ENCODE measurements at regions of chr6 and their contacts with region 1.

Region 1: DNA sequence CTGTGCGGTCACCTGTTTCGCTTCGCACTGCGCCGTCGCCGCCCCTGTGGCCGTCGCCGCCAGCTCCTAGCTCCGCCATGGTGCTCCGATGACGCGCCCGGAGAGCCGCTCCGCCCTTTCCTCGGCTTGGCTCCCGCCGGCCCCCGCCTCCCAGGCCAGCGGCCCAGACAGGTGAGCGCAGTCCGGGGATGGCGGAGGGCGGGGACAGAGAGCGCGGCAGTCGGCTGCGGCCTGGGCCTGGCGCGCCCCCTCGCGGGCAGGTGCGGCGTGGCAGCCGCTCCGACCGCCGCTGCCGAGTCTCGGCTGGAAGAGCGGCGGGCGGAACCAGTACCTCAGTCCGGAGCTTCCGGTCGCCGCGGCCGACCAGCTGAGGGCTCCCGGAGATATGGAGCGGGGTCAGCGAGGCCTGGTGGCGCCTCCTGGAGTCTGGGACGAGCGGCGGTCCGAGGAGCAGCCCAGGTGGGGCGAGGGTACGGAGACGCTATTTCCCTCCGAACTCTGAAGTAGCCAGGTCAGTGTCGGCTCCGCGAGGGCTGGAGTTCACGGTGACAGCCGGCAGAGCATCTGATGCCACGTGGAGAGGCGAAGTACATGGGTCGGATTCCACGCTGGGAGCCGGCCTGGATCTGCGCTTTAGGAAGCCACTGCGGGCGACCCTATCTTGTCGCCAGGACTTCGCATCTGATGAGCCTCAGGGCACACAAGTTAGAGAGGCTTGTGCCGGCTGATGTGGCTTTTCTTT is at the start of gene MAP7:
- DNase-seq: peak; percentile 58 to 80
- ATAC-seq: peak; percentile 90 to 94
- H3K4me3 ChIP-seq: peak within 1 kb of the TSS; percentile 98
- H3K27ac ChIP-seq: peak within 1 kb of the TSS; percentile 93 to 97
- H3K4me1 ChIP-seq: peaks cover 36% of the 10 kb centered on the region
- CTCF ChIP-seq: peak; percentile 87
- EP300 ChIP-seq: no peak
- POLR2A ChIP-seq: peak; percentile 44
- RAD21 ChIP-seq: peak; percentile 63 to 89; a peak in 4 of 5 replicates
- polyA plus RNA-seq, gene MAP7: 49.0 and 64.5 TPM in 2 replicates

Region 2: GRCh38 chr6:136371959-136372358 is 178.5 kb before region 1 on chr6:
- CTCF ChIA-PET with region 1: interaction called, 13 read pairs
- POLR2A ChIA-PET with region 1: no interaction called
- DNase-seq: no peak
- ATAC-seq: no peak
- H3K4me3 ChIP-seq: no peak overlapping the region
- H3K27ac ChIP-seq: peak overlapping the region in 1 of 2 experiments; percentile 21; a peak in 1 of 6 replicates
- H3K4me1 ChIP-seq: peaks cover 9% of the 10 kb centered on the region; the same call in 1 of the 3 replicates
- CTCF ChIP-seq: no peak
- EP300 ChIP-seq: no peak
- POLR2A ChIP-seq: no peak
- RAD21 ChIP-seq: no peak

Region 3: DNA sequence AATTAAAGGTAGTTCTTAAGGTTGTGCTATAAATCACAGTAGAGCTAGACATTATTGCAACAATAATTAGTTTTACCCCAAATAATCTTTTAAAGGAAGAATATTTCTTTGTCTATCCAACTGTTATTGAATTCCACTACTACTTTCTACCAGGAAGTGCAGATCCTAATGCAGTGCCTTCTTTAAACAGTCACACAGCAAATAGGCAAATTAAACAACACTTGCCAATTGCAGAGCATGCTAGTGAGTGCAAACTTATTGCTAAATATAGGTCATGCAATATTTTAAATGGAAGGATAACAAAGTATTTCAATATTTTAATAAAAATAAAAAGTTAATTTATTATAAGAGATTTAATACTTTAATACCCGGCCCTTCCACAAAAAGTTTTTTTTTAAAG is 153.6 kb before region 1 on chr6:
- CTCF ChIA-PET with region 1: interaction called, 11 read pairs
- POLR2A ChIA-PET with region 1: no interaction called
- DNase-seq: no peak
- ATAC-seq: no peak
- H3K4me3 ChIP-seq: no peak overlapping the region
- H3K27ac ChIP-seq: peak overlapping the region; percentile 72 to 97; a peak in 4 of 6 replicates
- H3K4me1 ChIP-seq: peaks cover 37% of the 10 kb centered on the region
- CTCF ChIP-seq: no peak
- EP300 ChIP-seq: no peak
- POLR2A ChIP-seq: no peak
- RAD21 ChIP-seq: no peak

Region 4: DNA sequence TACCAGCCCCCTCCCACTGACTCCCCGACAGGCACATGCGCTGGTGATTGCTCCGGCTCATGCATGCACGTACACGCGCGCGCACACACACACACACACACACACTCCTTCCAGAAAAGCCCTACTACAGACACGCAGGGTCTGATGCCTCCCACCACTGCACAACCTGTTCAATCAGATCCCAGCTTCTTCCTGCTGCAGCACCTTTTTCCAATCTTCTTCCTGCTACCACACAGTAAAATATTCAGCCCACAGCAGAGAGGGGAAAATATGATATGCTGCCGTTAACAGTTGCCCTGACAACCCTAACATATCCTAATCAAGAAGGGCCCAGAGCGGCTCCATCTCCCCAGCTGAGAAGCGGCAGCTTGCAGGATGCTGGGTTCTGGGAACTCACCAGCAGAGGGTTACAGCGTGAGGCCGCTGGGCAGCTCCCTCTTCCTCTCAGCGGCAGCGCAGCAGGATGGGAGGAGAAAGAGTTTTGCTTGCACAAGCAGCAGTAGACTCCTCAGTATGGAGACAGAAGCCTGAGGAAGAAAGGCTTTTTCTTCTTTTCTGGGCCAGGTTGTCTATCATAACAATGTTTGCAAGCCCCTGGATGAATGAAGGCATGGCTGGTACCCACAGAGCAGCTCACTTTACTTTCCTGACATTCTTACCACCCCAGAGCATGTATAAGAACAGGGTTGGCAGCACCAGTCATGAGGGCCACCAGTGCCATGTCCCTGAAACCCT is 24.1 kb before region 1 on chr6:
- CTCF ChIA-PET with region 1: interaction called, 36 read pairs
- POLR2A ChIA-PET with region 1: interaction called, 4 read pairs
- DNase-seq: peak; percentile 72 to 82
- ATAC-seq: peak; percentile 88 to 93
- H3K4me3 ChIP-seq: peak overlapping the region; percentile 37
- H3K27ac ChIP-seq: peak overlapping the region; percentile 91 to 97
- H3K4me1 ChIP-seq: peaks cover 92% of the 10 kb centered on the region
- CTCF ChIP-seq: peak; percentile 12; the same call in 2 of the 3 replicates
- EP300 ChIP-seq: no peak
- POLR2A ChIP-seq: peak; percentile 6
- RAD21 ChIP-seq: no peak; a peak in 1 of 5 replicates

Region 5: GRCh38 chr6:136566007-136566496 is 15.6 kb after region 1 on chr6:
- CTCF ChIA-PET with region 1: interaction called, 11 read pairs
- POLR2A ChIA-PET with region 1: no interaction called
- DNase-seq: no peak
- ATAC-seq: no peak
- H3K4me3 ChIP-seq: no peak overlapping the region
- H3K27ac ChIP-seq: no peak overlapping the region
- H3K4me1 ChIP-seq: 0 out of 3 replicates have a peak, but pooled peaks cover 4% of the 10 kb centered on the region
- CTCF ChIP-seq: no peak
- EP300 ChIP-seq: no peak
- POLR2A ChIP-seq: no peak
- RAD21 ChIP-seq: no peak

Region 6: DNA sequence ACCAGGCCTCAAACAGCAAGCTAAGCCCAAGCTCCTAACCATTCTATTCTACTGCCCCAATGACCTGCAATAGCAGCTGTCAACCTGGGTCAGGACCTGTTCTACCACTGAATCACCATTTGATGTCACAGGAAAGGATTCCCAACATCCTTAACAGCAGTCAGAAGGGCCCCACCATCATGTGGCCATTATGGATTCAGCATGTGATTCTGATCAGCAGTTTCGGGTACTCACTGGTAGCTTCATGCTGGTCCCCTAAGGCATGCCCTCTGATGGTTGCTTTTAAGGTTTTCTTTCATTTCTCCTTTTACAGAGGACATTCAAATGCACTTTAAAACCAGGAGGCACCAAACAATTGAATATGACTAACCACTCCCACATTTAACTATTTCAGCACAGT is 37.0 kb after region 1 on chr6:
- CTCF ChIA-PET with region 1: no interaction called
- POLR2A ChIA-PET with region 1: no interaction called
- DNase-seq: no peak
- ATAC-seq: no peak
- H3K4me3 ChIP-seq: no peak overlapping the region
- H3K27ac ChIP-seq: peak overlapping the region in 1 of 2 experiments; percentile 62; a peak in 1 of 6 replicates
- H3K4me1 ChIP-seq: peaks cover 13% of the 10 kb centered on the region
- CTCF ChIP-seq: no peak
- EP300 ChIP-seq: no peak
- POLR2A ChIP-seq: no peak
- RAD21 ChIP-seq: no peak

Measured in A549 (cell line).